ENCODE measurements at regions of chr17 and their contacts with region 1.

Region 1: GRCh38 chr17:49496183-49496866 is 1.2 kb downstream of the NGFR start:
- DNase-seq: peak; percentile 91
- ATAC-seq: peak; percentile 90

Region 2: GRCh38 chr17:49434821-49435670 is 61.3 kb before region 1 on chr17:
- intact Hi-C with region 1: loop called (anchors 5 kb)
- DNase-seq: no peak
- ATAC-seq: no peak

Region 3: GRCh38 chr17:49515196-49515770 is 19.0 kb after region 1 on chr17:
- intact Hi-C with region 1: loop called (anchors 2 kb)
- DNase-seq: peak; percentile 95
- ATAC-seq: peak; percentile 97

Region 4: DNA sequence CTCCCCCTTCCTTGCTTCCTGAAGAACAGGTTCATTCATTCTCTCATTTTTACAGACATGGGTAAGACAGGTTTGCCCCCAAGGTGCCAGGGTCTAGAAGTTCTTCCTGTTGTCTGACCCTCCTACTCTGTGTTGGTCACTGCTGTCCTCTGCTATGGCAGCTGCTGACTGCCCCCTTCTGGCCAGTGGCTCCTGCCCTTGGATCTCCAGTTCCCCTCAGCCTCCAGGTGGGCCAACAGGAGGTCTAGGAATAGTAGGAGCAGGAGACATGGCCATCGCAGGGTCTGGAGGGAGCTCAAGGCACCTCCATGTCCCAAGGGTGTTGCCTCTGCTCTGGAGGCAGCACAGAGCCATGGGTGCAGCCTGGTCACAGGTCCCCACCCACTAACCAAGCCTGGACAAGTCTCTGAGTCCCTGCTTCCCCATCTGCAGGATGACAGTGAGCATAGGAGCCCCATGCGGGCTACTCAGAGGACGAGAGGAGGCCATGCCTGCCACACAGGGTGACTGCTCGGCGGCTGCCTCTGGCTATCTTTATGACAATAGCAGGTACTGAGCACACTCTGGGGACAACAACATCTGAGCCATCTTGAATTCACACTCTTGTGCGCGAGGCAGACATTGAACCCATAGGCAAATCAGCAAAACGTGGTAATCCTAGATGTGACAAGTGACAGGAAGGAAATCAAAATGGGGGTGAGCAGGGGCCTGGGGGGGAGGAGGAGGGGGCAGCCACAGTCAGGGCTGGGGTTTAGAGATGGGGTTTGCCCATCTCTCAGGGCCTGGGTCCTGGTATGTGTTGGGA is 52.4 kb after region 1 on chr17:
- intact Hi-C with region 1: loop called (anchors 2 kb)
- DNase-seq: peak; percentile 46
- ATAC-seq: peak; percentile 69